ENCODE measurements at regions of chr5 and their contacts with region 1.

Region 1: GRCh38 chr5:126808521-126808988 is 31.6 kb downstream of the LMNB1 start:
- DNase-seq: no peak
- H3K4me3 ChIP-seq: no peak overlapping the region
- H3K27ac ChIP-seq: no peak overlapping the region
- H3K4me1 ChIP-seq: no peaks in the 10 kb centered on the region
- H3K27me3 ChIP-seq: no peaks in the 10 kb centered on the region
- CTCF ChIP-seq: peak; percentile 41 to 55 (median 46)
- EP300 ChIP-seq: no peak
- POLR2A ChIP-seq: no peak

Region 2: DNA sequence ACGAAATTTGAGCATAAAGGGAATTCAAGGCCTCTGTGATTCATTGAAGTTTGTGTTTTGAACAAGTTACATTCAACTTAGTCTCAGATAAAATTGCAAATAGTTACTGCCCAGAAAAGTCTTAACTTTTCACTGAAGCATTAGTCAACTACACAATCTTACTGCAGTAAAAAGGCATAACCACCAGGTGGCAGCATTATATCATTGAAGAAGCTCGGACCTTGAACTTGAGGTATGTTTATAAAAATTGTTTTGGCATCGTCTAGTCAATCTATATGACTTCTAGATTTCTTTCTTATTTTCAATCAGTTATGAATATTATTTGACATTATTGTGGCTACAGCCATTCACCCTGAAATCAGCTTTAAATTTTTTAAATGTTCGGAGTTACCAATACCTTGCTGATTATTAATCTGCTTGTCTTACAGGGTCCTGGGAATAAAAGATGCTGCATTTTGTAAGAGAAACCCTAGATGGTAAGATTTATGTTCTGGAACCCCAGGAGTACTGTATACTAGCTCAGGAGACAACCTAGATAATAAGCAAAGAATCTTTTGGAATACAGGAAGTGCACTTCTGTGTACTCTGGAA is 469.2 kb before region 1 on chr5:
- in situ Hi-C with region 1: loop called in 1 of 4 experiments (anchors 25 kb)
- intact Hi-C with region 1: no loop called
- DNase-seq: peak; percentile 38
- H3K4me3 ChIP-seq: no peak overlapping the region
- H3K27ac ChIP-seq: no peak overlapping the region
- H3K4me1 ChIP-seq: peaks cover 0 to 4% (median 0%) of the 10 kb centered on the region in 4 donors
- H3K27me3 ChIP-seq: no peaks in the 10 kb centered on the region
- CTCF ChIP-seq: peak; percentile 86 to 89 (median 88)
- EP300 ChIP-seq: no peak
- POLR2A ChIP-seq: no peak

Region 3: GRCh38 chr5:126676195-126676624 is 132.3 kb before region 1 on chr5:
- in situ Hi-C with region 1: loop called in 1 of 4 experiments (anchors 10 kb)
- intact Hi-C with region 1: no loop called
- DNase-seq: peak; percentile 69
- H3K4me3 ChIP-seq: no peak overlapping the region
- H3K27ac ChIP-seq: no peak overlapping the region
- H3K4me1 ChIP-seq: peaks cover 0 to 32% (median 8%) of the 10 kb centered on the region in 4 donors
- H3K27me3 ChIP-seq: no peaks in the 10 kb centered on the region
- CTCF ChIP-seq: peak; percentile 76 to 90 (median 80)
- EP300 ChIP-seq: no peak
- POLR2A ChIP-seq: no peak

Region 4: DNA sequence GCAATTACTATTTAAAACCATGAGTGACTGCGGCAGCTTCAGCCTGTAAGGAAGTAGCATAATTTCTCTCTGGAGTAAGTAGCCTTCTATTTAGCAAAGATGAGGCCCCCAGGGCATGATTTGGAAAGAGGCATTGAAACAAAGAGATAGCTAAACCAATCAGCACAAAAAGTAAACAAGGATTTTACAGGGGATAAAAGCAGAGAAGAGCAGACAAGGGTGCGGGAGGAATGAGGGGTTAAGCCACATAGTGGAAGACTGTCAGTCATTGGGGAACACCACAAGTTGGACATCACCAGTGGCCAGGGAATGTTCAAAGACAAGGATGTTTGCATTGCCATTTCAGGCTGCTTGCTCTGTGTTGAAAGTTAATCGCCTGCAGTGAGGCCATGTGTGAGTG is 288.7 kb after region 1 on chr5:
- in situ Hi-C with region 1: no loop called
- intact Hi-C with region 1: no loop called
- DNase-seq: no peak
- H3K4me3 ChIP-seq: no peak overlapping the region
- H3K27ac ChIP-seq: no peak overlapping the region
- H3K4me1 ChIP-seq: no peaks in the 10 kb centered on the region
- H3K27me3 ChIP-seq: no peaks in the 10 kb centered on the region
- CTCF ChIP-seq: no peak
- EP300 ChIP-seq: no peak
- POLR2A ChIP-seq: no peak

Measured in transverse colon (tissue), 4 donors.